Heart left ventricle (tissue), 16 donors: ENCODE measurements at regions of chr16 and their contacts with region 1.

Region 1: GRCh38 chr16:24504472-24505345 is 34.7 kb upstream of the RBBP6 start:
- DNase-seq: peak in 4 of 5 donors; percentile 31 to 42 (median 38)
- ATAC-seq: peak; percentile 42 to 90 (median 82)
- H3K4me3 ChIP-seq: no peak overlapping the region
- H3K27ac ChIP-seq: no peak overlapping the region
- H3K4me1 ChIP-seq: no peaks in the 10 kb centered on the region
- H3K27me3 ChIP-seq: peaks cover 0 to 29% (median 6%) of the 10 kb centered on the region in 9 donors
- CTCF ChIP-seq: peak; percentile 65 to 82 (median 75)
- POLR2A ChIP-seq: no peak

Region 2: DNA sequence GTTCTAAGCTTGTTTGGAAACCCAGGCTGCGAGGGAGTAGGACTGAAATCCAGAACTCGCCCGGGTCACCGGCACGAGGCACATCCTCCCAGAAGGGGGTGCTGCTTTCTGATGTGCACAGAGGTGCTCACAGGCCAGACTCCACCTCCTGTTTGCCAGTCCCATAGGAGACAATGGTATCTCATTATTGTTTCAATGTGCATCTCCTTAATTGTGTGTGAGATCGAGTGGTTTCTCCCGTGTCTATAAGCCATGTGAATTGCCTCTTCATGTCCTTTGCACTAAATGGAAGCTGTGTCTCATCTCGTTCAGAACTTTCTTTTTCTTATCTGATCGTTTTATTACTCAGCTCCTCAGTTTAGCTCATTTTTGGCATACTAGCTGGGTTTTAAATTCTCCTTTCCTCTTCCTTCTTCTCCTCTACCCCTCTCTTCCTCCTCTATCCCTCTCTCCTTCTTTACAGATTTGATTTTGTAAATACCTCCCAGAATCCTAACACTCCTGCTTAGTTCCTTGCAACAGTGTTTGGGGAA is 701.1 kb before region 1 on chr16:
- intact Hi-C with region 1: loop called in 5 of 10 experiments (anchors 5 to 10 kb)
- DNase-seq: peak; percentile 23 to 74 (median 40)
- ATAC-seq: peak in 2 of 4 donors; percentile 39 to 67
- H3K4me3 ChIP-seq: no peak overlapping the region
- H3K27ac ChIP-seq: no peak overlapping the region
- H3K4me1 ChIP-seq: peaks cover 0 to 7% (median 0%) of the 10 kb centered on the region in 12 donors
- H3K27me3 ChIP-seq: peaks cover 0 to 38% (median 0%) of the 10 kb centered on the region in 9 donors
- CTCF ChIP-seq: peak in 11 of 12 donors; percentile 11 to 44 (median 37)
- POLR2A ChIP-seq: no peak

Region 3: GRCh38 chr16:24054741-24055491 is 449.8 kb before region 1 on chr16:
- intact Hi-C with region 1: loop called in 2 of 10 experiments (anchors 5 kb)
- DNase-seq: no peak
- ATAC-seq: no peak
- H3K4me3 ChIP-seq: no peak overlapping the region
- H3K27ac ChIP-seq: no peak overlapping the region
- H3K4me1 ChIP-seq: no peaks in the 10 kb centered on the region
- H3K27me3 ChIP-seq: peaks cover 0 to 58% (median 4%) of the 10 kb centered on the region in 9 donors
- CTCF ChIP-seq: no peak
- POLR2A ChIP-seq: no peak

Region 4: DNA sequence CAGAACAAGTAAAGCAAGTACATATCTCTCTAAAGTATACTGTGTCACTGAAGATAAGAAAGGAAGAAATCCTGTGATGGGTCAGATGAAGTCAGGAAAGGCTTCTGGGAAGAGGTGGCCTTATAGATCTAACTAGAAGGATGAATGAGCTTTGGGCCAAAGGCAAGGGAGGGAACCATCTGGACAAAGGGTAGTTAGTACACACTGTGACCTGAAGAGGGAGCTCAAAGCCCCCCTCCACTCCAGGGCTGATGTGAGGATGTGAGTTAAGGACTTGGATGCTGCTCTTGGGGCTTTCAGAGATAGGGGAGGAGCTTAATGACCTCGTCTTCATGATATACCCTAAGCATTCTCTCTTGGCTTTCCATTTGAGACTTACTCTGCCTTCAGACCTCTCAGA is 433.9 kb before region 1 on chr16:
- intact Hi-C with region 1: loop called in 1 of 10 experiments (anchors 1 kb)
- DNase-seq: peak in 1 of 5 donors; percentile 24
- ATAC-seq: peak in 3 of 4 donors; percentile 45 to 75 (median 62)
- H3K4me3 ChIP-seq: no peak overlapping the region
- H3K27ac ChIP-seq: no peak overlapping the region
- H3K4me1 ChIP-seq: no peaks in the 10 kb centered on the region
- H3K27me3 ChIP-seq: no peaks in the 10 kb centered on the region
- CTCF ChIP-seq: peak in 11 of 12 donors; percentile 32 to 61 (median 50)
- POLR2A ChIP-seq: no peak

Region 5: DNA sequence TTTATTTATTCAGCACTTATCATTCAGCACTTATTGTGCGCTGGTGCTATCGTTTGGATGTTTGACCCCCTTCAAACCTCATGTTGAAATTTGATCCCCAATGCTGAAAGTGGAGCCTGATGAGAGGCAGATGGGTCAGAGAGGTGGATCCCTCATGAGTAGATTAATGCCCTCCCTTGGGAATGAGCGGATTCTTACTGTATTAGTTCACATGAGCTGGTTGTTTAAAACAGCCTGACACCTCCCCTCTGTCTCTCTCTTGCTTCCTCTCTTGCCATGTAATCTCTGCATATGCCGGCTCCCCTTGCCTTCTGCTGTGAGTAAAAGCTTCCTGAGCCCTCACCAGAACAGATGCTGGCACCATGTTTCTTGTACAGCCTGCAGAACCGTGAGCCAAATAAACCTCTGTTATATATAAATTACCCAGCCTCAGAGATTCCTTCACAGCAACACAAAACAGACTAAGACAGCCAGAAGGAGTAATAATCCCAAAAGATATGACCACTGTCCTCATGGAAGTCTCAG is 137.5 kb before region 1 on chr16:
- intact Hi-C with region 1: no loop called
- DNase-seq: no peak
- ATAC-seq: no peak
- H3K4me3 ChIP-seq: no peak overlapping the region
- H3K27ac ChIP-seq: no peak overlapping the region
- H3K4me1 ChIP-seq: no peaks in the 10 kb centered on the region
- H3K27me3 ChIP-seq: peaks cover 0 to 4% (median 0%) of the 10 kb centered on the region in 9 donors
- CTCF ChIP-seq: no peak
- POLR2A ChIP-seq: no peak

Region 6: DNA sequence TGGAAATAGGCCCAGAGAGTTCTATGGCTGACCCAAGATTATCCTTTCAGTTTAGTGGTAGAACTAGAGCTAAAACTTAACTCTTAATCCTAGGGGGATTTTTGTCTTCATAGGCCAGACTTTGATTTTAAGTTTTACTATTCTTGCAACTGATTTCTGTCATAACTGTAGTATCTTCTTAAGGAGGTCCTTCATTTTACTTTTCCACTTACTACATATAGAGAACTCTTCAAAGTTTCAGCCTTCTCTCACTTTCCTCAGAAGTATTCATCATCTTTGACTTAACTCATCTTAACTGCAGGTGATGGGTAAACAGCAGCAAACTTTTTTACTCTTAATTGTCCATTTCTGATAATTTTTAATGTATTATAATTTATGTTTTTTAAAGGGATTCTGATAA is 58.1 kb after region 1 on chr16:
- intact Hi-C with region 1: no loop called
- DNase-seq: no peak
- ATAC-seq: no peak
- H3K4me3 ChIP-seq: no peak overlapping the region
- H3K27ac ChIP-seq: no peak overlapping the region
- H3K4me1 ChIP-seq: no peaks in the 10 kb centered on the region
- H3K27me3 ChIP-seq: no peaks in the 10 kb centered on the region
- CTCF ChIP-seq: no peak
- POLR2A ChIP-seq: no peak

Region 7: GRCh38 chr16:24635900-24636610 is 131.3 kb after region 1 on chr16:
- intact Hi-C with region 1: no loop called
- DNase-seq: peak; percentile 63 to 81 (median 71)
- ATAC-seq: peak; percentile 60 to 77 (median 69)
- H3K4me3 ChIP-seq: no peak overlapping the region
- H3K27ac ChIP-seq: peak overlapping the region in 1 of 12 donors; percentile 5
- H3K4me1 ChIP-seq: peaks cover 0 to 14% (median 10%) of the 10 kb centered on the region in 12 donors
- H3K27me3 ChIP-seq: no peaks in the 10 kb centered on the region
- CTCF ChIP-seq: no peak
- POLR2A ChIP-seq: no peak